ENCODE measurements at regions of chr6 and their contacts with region 1.

Region 1: GRCh38 chr6:109440331-109441068 is at the starts of genes PPIL6 and SMPD2:
- DNase-seq: peak; percentile 57 to 83
- ATAC-seq: peak; percentile 81 to 88
- H3K4me3 ChIP-seq: peak within 1 kb of the TSS; percentile 76
- H3K27ac ChIP-seq: peak within 1 kb of the TSS; percentile 81 to 96
- H3K4me1 ChIP-seq: peaks cover 8% of the 10 kb centered on the region
- CTCF ChIP-seq: peak; percentile 27; the same call in 2 of the 3 replicates
- EP300 ChIP-seq: no peak
- POLR2A ChIP-seq: peak; percentile 57
- RAD21 ChIP-seq: no peak
- polyA plus RNA-seq, gene PPIL6: 4.4 and 5.0 TPM in 2 replicates
- polyA plus RNA-seq, gene SMPD2: 9.6 and 13.1 TPM in 2 replicates

Region 2: GRCh38 chr6:109373762-109374161 is 66.7 kb before region 1 on chr6:
- CTCF ChIA-PET with region 1: no interaction called
- POLR2A ChIA-PET with region 1: no interaction called
- DNase-seq: no peak
- ATAC-seq: no peak
- H3K4me3 ChIP-seq: no peak overlapping the region
- H3K27ac ChIP-seq: no peak overlapping the region
- H3K4me1 ChIP-seq: peaks cover 15% of the 10 kb centered on the region; the same call in 2 of the 3 replicates
- CTCF ChIP-seq: no peak
- EP300 ChIP-seq: no peak
- POLR2A ChIP-seq: no peak
- RAD21 ChIP-seq: no peak

Region 3: GRCh38 chr6:109455502-109456282 is 15.2 kb after region 1 on chr6 and contains the start of gene MICAL1:
- CTCF ChIA-PET with region 1: interaction called, 16 read pairs
- POLR2A ChIA-PET with region 1: interaction called, 18 read pairs
- DNase-seq: peak; percentile 33 to 40
- ATAC-seq: peak; percentile 84 to 89
- H3K4me3 ChIP-seq: peak within 1 kb of the TSS; percentile 93
- H3K27ac ChIP-seq: peak within 1 kb of the TSS; percentile 81 to 93
- H3K4me1 ChIP-seq: peaks cover 14% of the 10 kb centered on the region; the same call in 1 of the 3 replicates
- CTCF ChIP-seq: no peak
- EP300 ChIP-seq: no peak
- POLR2A ChIP-seq: peak; percentile 47
- RAD21 ChIP-seq: no peak
- polyA plus RNA-seq, gene MICAL1: 14.1 and 14.9 TPM in 2 replicates

Measured in A549 (cell line).